CD4-positive, alpha-beta T cell (primary cell): ENCODE measurements at regions of chr12 and their contacts with region 1.

Region 1: DNA sequence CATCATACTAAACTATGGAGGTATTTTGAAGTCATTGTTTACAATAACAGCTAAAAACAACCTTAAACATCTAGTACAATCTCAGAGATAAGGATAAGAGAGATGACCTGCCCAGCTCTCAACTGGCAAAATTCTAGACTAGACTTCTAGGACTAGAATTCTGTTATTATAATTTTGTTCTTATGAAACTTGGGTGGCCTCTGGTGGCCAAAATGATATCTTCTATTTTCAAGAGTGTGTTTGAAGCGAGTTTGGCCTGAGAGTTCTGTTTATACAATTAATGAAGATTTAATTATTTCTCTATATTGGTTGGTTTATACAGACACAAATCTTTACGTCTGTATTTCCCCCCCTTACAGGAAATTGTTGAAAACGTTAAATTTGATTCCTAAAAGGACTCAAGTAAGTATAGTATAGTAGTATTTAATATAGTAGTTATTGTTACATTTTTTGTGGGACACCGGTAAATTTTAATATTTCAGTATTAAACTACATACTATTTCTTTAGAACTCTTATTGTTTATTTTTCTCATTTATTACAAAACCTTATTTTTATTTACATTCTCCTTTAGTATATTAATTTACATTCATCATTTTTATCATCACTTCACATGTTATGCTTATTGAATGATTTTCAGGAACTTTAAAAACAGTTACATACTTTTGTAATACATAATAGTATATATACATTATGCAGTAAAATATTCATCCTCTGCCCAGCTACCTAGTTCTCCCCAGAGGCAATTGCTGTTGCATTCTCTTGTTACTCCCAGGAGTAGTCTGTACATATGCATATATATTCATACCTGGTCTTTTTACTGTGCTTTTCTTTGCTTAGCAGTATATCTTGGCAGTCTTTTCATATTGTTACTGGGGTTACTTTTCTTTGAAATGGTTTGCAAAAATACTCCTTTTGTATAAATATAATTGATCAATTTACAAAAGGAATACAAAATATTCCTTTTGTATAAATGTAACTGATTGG is 6.6 kb downstream of the PPHLN1 start:
- DNase-seq: peak in 6 of 14 experiments; percentile 7 to 68 (median 52)
- ATAC-seq: peak; percentile 73
- H3K4me3 ChIP-seq: no peak overlapping the region
- H3K4me3 Mint-ChIP-seq: no peak overlapping the region
- H3K27ac ChIP-seq: no peak overlapping the region
- H3K27ac Mint-ChIP-seq: no peak overlapping the region
- H3K4me1 ChIP-seq: peaks cover 16% of the 10 kb centered on the region
- H3K4me1 Mint-ChIP-seq: peaks cover 72% of the 10 kb centered on the region
- H3K27me3 ChIP-seq: no peaks in the 10 kb centered on the region
- H3K27me3 Mint-ChIP-seq: no peaks in the 10 kb centered on the region
- CTCF ChIP-seq: peak; percentile 68

Region 2: DNA sequence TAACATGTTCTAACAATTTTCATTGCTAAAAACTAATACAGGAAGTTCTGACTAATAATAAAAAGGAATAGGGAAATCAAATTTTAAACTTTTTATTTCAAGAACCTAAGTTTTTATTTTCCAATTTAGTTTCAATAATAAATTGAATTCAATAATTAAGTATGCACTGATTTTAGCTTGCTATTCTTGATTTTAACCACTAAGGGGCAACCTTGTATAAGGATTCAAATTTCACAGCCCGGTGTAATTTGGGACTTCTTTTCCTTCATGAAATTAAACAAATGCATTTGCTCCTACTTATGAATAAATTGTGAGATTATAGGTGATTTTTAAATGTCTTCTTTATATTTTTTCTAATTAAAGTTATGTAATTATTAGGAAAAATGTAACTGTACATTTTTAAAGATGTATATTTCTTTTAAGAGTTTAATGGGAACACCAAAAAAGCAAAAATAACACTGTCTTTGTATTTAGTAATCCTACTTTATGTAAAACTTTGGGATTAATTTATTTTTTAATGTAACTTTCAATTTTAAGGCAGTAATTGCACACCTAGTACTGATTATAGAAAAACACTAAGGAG is 1385.9 kb before region 1 on chr12:
- CTCF ChIA-PET with region 1: no interaction called
- POLR2A ChIA-PET with region 1: no interaction called
- intact Hi-C with region 1: loop called in 1 of 2 experiments (anchors 2 kb)
- DNase-seq: peak in 3 of 14 experiments; percentile 35 to 41 (median 35)
- ATAC-seq: no peak
- H3K4me3 ChIP-seq: no peak overlapping the region
- H3K4me3 Mint-ChIP-seq: no peak overlapping the region
- H3K27ac ChIP-seq: no peak overlapping the region
- H3K27ac Mint-ChIP-seq: no peak overlapping the region
- H3K4me1 ChIP-seq: no peaks in the 10 kb centered on the region
- H3K4me1 Mint-ChIP-seq: no peaks in the 10 kb centered on the region
- H3K27me3 ChIP-seq: peaks cover 0 to 3% of the 10 kb centered on the region in 2 experiments
- H3K27me3 Mint-ChIP-seq: peaks cover 4% of the 10 kb centered on the region
- CTCF ChIP-seq: peak; percentile 60

Region 3: DNA sequence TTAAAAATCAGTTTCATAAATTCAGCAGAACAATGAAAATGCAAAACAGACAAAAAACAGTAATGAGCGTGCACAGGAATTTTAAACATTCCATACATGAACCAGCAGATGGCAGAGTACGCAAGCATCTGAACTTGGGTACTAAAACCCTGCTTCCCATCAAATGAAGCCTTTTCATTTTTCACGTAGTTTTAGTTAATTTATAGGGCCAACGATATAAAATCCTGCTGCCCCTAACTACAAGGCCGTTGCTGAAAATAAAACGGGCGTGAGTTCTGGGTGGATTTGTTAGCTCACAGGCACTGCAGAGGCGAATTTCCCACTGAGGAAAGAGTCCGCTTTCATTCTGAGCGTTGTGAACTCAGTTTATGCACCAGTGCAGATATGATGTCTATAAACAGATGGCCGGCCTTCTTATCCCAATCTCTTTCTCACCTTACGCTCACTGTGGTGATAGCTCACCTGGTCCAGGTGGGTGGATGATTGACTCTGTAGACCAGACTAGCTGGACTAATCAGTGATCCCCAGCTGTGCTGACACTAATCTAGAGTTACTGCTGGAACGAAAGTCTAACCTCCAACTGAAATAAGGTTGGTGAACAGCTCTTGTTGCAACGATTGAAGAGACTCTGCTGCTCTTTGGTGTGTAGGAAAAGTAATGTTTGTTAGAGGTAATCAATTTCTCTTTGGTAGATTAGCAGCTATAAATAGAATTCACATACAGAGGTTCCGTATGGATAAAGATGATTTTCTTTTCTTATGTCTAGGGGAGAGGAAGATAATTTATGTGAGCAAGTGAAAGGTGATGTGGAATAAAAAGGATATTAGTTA is 1055.3 kb before region 1 on chr12:
- CTCF ChIA-PET with region 1: no interaction called
- POLR2A ChIA-PET with region 1: no interaction called
- intact Hi-C with region 1: loop called in 1 of 2 experiments (anchors 5 kb)
- DNase-seq: peak in 4 of 14 experiments; percentile 4 to 39 (median 24)
- ATAC-seq: peak; percentile 29
- H3K4me3 ChIP-seq: no peak overlapping the region
- H3K4me3 Mint-ChIP-seq: no peak overlapping the region
- H3K27ac ChIP-seq: no peak overlapping the region
- H3K27ac Mint-ChIP-seq: no peak overlapping the region
- H3K4me1 ChIP-seq: no peaks in the 10 kb centered on the region
- H3K4me1 Mint-ChIP-seq: no peaks in the 10 kb centered on the region
- H3K27me3 ChIP-seq: peaks cover 0 to 6% of the 10 kb centered on the region in 2 experiments
- H3K27me3 Mint-ChIP-seq: no peaks in the 10 kb centered on the region
- CTCF ChIP-seq: peak; percentile 33

Region 4: DNA sequence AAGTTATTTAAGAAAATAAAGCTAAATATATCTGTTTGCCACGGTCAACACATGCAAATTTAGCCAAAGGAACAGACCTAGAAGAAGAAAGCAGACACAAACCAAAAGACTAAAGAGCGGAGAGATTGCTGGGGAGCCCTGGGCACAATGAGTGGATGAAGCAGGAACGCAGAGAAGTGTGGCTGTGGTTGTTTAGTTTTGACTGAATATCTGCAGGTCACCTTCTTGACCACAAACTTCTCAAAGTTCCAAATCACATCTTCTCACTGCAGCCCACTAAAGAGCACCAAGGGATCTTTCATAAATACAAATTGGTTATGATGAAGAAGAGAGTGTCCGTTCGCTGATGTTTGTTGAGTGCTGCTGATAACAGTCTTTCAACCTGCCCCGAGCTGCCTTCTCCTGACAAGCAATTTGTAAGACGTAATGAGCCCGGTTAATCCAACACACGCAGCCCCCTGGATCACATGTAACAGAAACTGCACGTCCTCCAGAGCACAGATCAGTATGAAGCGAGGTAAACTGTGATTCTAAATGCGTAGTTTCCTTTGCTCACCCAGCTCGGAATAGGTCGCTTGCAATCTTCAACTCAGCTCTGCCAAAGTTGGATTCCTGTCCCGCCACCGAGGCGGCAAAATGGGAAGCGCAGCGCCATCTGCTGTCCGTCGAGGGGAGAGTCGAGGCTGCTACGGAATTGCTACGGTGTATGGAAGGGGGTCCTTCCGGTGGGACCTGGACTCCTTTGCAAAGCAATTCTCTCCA is 308.7 kb before region 1 on chr12:
- CTCF ChIA-PET with region 1: no interaction called
- POLR2A ChIA-PET with region 1: no interaction called
- intact Hi-C with region 1: loop called in 1 of 2 experiments (anchors 5 kb)
- DNase-seq: peak; percentile 48 to 78 (median 59)
- ATAC-seq: peak; percentile 83
- H3K4me3 ChIP-seq: peak overlapping the region; percentile 36
- H3K4me3 Mint-ChIP-seq: peak overlapping the region; percentile 73
- H3K27ac ChIP-seq: no peak overlapping the region
- H3K27ac Mint-ChIP-seq: no peak overlapping the region
- H3K4me1 ChIP-seq: peaks cover 8% of the 10 kb centered on the region
- H3K4me1 Mint-ChIP-seq: peaks cover 9% of the 10 kb centered on the region
- H3K27me3 ChIP-seq: peaks cover 3 to 8% of the 10 kb centered on the region in 2 experiments
- H3K27me3 Mint-ChIP-seq: peaks cover 25% of the 10 kb centered on the region
- CTCF ChIP-seq: peak; percentile 90

Region 5: GRCh38 chr12:42129595-42130204 is 202.9 kb before region 1 on chr12:
- CTCF ChIA-PET with region 1: interaction called, 5 read pairs
- POLR2A ChIA-PET with region 1: no interaction called
- intact Hi-C with region 1: loop called (anchors 1 to 5 kb)
- DNase-seq: peak in 4 of 14 experiments; percentile 38 to 62 (median 53)
- ATAC-seq: peak; percentile 65
- H3K4me3 ChIP-seq: no peak overlapping the region
- H3K4me3 Mint-ChIP-seq: no peak overlapping the region
- H3K27ac ChIP-seq: no peak overlapping the region
- H3K27ac Mint-ChIP-seq: no peak overlapping the region
- H3K4me1 ChIP-seq: no peaks in the 10 kb centered on the region
- H3K4me1 Mint-ChIP-seq: peaks cover 49% of the 10 kb centered on the region
- H3K27me3 ChIP-seq: no peaks in the 10 kb centered on the region
- H3K27me3 Mint-ChIP-seq: no peaks in the 10 kb centered on the region
- CTCF ChIP-seq: peak; percentile 65

Region 6: GRCh38 chr12:42237052-42237852 is 95.3 kb before region 1 on chr12:
- CTCF ChIA-PET with region 1: interaction called, 3 read pairs
- POLR2A ChIA-PET with region 1: no interaction called
- intact Hi-C with region 1: loop called (anchors 1 to 2 kb)
- DNase-seq: peak; percentile 42 to 90 (median 62)
- ATAC-seq: peak; percentile 72
- H3K4me3 ChIP-seq: peak overlapping the region; percentile 64
- H3K4me3 Mint-ChIP-seq: peak overlapping the region; percentile 91
- H3K27ac ChIP-seq: peak overlapping the region; percentile 35 to 56
- H3K27ac Mint-ChIP-seq: peak overlapping the region; percentile 93
- H3K4me1 ChIP-seq: peaks cover 17% of the 10 kb centered on the region
- H3K4me1 Mint-ChIP-seq: peaks cover 55% of the 10 kb centered on the region
- H3K27me3 ChIP-seq: no peaks in the 10 kb centered on the region
- H3K27me3 Mint-ChIP-seq: no peaks in the 10 kb centered on the region
- CTCF ChIP-seq: peak; percentile 56

Region 7: GRCh38 chr12:42372154-42372791 is 39.7 kb after region 1 on chr12:
- CTCF ChIA-PET with region 1: interaction called, 5 read pairs
- POLR2A ChIA-PET with region 1: no interaction called
- intact Hi-C with region 1: loop called in 1 of 2 experiments (anchors 5 kb)
- DNase-seq: peak in 5 of 14 experiments; percentile 3 to 74 (median 63)
- ATAC-seq: peak; percentile 95
- H3K4me3 ChIP-seq: no peak overlapping the region
- H3K4me3 Mint-ChIP-seq: no peak overlapping the region
- H3K27ac ChIP-seq: no peak overlapping the region
- H3K27ac Mint-ChIP-seq: no peak overlapping the region
- H3K4me1 ChIP-seq: no peaks in the 10 kb centered on the region
- H3K4me1 Mint-ChIP-seq: peaks cover 18% of the 10 kb centered on the region
- H3K27me3 ChIP-seq: no peaks in the 10 kb centered on the region
- H3K27me3 Mint-ChIP-seq: no peaks in the 10 kb centered on the region
- CTCF ChIP-seq: peak; percentile 75